ENCODE measurements at regions of chr20 and their contacts with region 1.

Region 1: DNA sequence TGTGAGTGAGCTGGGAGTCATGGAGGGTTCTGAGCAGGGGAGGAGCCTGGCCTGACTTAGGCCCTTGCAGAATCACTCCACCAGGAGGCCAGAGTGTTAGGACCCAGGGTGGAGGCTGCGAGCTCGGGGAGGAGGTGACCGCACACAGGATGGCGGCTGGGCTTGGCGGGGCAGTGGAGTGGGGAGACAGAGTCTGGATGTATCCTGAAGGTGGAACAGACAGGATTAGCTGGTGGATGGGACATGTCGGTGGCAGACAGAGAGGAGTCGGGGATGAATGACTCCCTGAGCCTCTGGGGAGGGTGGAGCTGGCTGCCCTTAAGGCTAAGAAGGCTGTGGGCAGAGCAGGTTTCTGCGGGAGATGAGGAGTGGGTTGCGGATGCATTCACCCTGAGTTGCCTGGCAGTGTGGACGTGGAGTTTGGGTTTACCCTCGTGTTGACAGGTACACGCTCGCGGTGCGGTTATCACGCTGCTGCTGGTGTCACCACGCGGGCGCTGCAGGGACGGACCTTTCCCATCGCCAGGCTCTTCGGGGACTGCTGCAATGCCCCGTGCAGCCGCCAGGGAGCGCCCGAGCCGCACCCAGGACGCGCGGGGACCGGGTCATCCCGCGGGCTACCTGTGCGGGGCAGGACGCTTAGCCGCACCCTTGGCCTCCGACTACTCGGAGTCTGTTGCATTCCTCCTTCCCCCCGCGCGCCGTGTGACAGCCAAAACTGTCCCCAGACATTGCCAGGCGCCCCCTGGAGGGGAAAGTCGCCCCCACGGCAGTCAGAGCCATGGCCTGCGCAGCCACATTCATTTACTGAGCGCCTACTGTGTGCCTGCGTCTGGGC is 43.0 kb upstream of the PTGIS start:
- DNase-seq: peak; percentile 54
- H3K4me3 ChIP-seq: no peak overlapping the region
- H3K27ac ChIP-seq: no peak overlapping the region
- H3K4me1 ChIP-seq: no peaks in the 10 kb centered on the region
- H3K27me3 ChIP-seq: no peaks in the 10 kb centered on the region
- CTCF ChIP-seq: peak; percentile 99
- POLR2A ChIP-seq: no peak

Region 2: GRCh38 chr20:49245921-49246740 is 364.8 kb before region 1 on chr20:
- CTCF ChIA-PET with region 1: no interaction called
- POLR2A ChIA-PET with region 1: no interaction called
- dilution Hi-C with region 1: no loop called
- intact Hi-C with region 1: no loop called
- DNase-seq: peak; percentile 72
- H3K4me3 ChIP-seq: no peak overlapping the region
- H3K27ac ChIP-seq: no peak overlapping the region
- H3K4me1 ChIP-seq: peaks cover 26% of the 10 kb centered on the region
- H3K27me3 ChIP-seq: no peaks in the 10 kb centered on the region
- CTCF ChIP-seq: peak; percentile 68
- POLR2A ChIP-seq: no peak

Region 3: DNA sequence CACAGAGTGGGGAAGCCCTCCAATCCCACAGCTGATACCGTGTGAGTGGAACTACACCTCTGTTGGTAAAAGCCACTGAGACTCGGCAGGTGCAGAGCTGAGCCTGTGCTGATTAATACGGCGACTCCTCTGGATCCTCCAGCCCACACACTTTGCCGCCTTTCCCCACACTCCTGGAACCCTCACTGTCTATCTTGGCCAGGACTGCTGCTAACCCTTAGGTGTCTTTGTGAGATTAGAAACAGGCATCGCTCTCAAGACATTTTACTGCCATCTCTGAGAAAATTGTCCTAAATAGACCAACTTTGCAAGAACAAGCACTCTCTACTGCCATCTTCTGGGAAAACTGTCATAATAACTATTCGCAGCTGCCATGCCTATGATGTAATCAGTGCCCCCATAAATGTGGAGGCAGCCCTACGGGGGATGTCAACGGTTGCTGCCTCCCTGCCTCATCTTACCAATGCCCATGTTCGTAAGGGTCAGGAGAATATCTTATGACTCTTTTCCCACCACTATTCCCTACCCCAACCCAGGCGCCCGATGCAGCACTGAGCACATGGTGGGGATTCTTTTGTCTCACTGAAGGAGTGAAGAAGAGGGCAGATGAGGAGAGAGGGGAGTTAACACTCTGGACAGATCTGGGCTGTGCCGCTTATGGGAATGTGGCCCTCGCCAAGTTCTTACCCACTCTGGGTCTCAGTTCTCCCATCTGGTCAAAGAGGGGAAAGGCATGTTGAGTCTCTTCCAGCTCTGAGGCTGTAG is 102.3 kb before region 1 on chr20:
- CTCF ChIA-PET with region 1: interaction called, 12 read pairs
- POLR2A ChIA-PET with region 1: interaction called, 6 read pairs
- dilution Hi-C with region 1: no loop called
- intact Hi-C with region 1: no loop called
- DNase-seq: peak; percentile 44
- H3K4me3 ChIP-seq: no peak overlapping the region
- H3K27ac ChIP-seq: no peak overlapping the region
- H3K4me1 ChIP-seq: no peaks in the 10 kb centered on the region
- H3K27me3 ChIP-seq: peaks cover 4 to 8% of the 10 kb centered on the region in 2 experiments
- CTCF ChIP-seq: peak; percentile 35 to 46
- POLR2A ChIP-seq: no peak

Region 4: GRCh38 chr20:49519777-49520359 is 91.1 kb before region 1 on chr20:
- CTCF ChIA-PET with region 1: no interaction called
- POLR2A ChIA-PET with region 1: no interaction called
- dilution Hi-C with region 1: no loop called
- intact Hi-C with region 1: no loop called
- DNase-seq: no peak
- H3K4me3 ChIP-seq: no peak overlapping the region
- H3K27ac ChIP-seq: no peak overlapping the region
- H3K4me1 ChIP-seq: no peaks in the 10 kb centered on the region
- H3K27me3 ChIP-seq: no peaks in the 10 kb centered on the region
- CTCF ChIP-seq: no peak
- POLR2A ChIP-seq: no peak

Region 5: DNA sequence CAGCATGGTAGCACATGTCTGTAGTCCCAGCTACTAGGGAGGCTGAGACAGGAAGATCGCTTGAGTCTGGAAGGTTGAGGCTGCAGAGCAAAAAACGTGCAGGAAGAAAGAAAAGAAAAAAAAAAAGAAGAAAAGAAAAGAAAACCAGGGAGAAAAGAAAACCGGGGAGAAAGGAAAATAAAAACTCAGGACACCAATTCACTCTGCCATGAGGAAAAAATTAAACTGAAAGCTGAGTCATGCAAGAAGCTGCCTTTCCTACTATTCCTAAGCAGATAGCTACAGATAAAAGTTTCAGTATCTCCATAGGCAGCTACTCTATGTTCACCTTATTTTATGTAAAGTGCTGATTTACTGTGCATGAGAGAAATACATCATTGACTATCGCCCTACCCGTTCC is 53.5 kb before region 1 on chr20:
- CTCF ChIA-PET with region 1: interaction called, 15 read pairs
- POLR2A ChIA-PET with region 1: no interaction called
- dilution Hi-C with region 1: no loop called
- intact Hi-C with region 1: no loop called
- DNase-seq: peak; percentile 32
- H3K4me3 ChIP-seq: no peak overlapping the region
- H3K27ac ChIP-seq: no peak overlapping the region
- H3K4me1 ChIP-seq: peaks cover 27% of the 10 kb centered on the region
- H3K27me3 ChIP-seq: no peaks in the 10 kb centered on the region
- CTCF ChIP-seq: no peak
- POLR2A ChIP-seq: no peak

Region 6: DNA sequence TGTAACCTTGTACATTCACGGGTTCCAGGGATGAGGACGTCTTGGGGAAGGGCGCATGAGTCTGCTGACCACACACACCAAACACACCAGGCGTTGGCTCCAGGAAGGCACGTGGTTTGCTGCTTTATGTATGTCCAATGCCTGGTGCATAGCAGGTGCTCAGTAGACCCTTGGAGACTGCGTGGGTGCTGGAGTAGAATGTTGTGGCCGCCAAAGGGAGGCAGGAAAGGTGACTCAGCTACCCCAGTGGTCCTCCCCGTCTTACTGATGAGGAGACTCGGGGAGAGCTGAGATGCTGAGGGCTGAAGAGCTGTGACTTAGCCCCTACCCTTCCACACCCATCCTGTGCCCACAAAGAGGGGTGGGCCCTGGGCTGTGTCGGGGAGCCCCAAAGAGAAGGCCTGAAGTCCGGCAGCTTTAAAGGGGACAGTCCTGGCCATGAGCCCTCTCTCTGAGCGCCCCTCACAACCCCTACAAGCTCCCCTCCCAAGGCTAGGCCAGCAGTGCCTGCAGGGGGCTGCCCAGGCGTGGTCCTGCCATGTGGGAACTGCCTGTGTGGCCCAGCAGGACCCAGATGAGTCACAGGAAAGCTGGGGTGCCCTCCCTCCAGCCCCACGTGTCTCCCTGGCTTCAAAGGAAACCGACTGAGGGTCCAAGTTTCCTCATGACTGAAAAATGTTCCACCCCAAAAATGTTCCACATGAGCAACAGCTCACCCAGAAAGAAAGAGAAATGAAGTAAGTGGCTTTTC is 14.9 kb before region 1 on chr20:
- CTCF ChIA-PET with region 1: interaction called, 12 read pairs
- POLR2A ChIA-PET with region 1: no interaction called
- dilution Hi-C with region 1: no loop called
- intact Hi-C with region 1: no loop called
- DNase-seq: peak; percentile 44
- H3K4me3 ChIP-seq: no peak overlapping the region
- H3K27ac ChIP-seq: no peak overlapping the region
- H3K4me1 ChIP-seq: peaks cover 19% of the 10 kb centered on the region
- H3K27me3 ChIP-seq: no peaks in the 10 kb centered on the region
- CTCF ChIP-seq: no peak
- POLR2A ChIP-seq: no peak

Region 7: DNA sequence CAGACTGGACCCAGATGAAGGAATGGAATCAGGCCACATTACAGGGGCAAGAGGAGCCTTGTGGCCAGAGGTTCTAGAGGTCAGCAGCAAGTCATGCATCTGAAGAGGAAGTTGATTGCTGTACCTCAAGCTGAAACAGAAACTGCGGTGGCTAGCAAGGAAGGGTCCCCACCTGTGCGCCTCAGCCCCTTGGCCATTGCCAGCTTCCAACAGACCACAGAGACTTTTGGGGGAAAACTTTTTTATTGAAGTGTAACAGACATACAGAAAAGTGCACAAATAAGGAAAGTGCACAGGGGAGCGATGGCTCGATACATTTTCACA is 174.9 kb after region 1 on chr20:
- CTCF ChIA-PET with region 1: interaction called, 3 read pairs
- POLR2A ChIA-PET with region 1: no interaction called
- dilution Hi-C with region 1: no loop called
- intact Hi-C with region 1: loop called (anchors 1 kb)
- DNase-seq: no peak
- H3K4me3 ChIP-seq: no peak overlapping the region
- H3K27ac ChIP-seq: no peak overlapping the region
- H3K4me1 ChIP-seq: peaks cover 20% of the 10 kb centered on the region
- H3K27me3 ChIP-seq: no peaks in the 10 kb centered on the region
- CTCF ChIP-seq: no peak
- POLR2A ChIP-seq: no peak

Region 8: GRCh38 chr20:49893242-49894072 is 282.5 kb after region 1 on chr20:
- CTCF ChIA-PET with region 1: interaction called, 69 read pairs
- POLR2A ChIA-PET with region 1: no interaction called
- dilution Hi-C with region 1: no loop called
- intact Hi-C with region 1: loop called (anchors 1 kb)
- DNase-seq: no peak
- H3K4me3 ChIP-seq: no peak overlapping the region
- H3K27ac ChIP-seq: no peak overlapping the region
- H3K4me1 ChIP-seq: peaks cover 17% of the 10 kb centered on the region
- H3K27me3 ChIP-seq: no peaks in the 10 kb centered on the region
- CTCF ChIP-seq: no peak
- POLR2A ChIP-seq: no peak